Panc1 (cell line): ENCODE measurements at regions of chr12 and their contacts with region 1.

Region 1: GRCh38 chr12:54958048-54958658 is 26.4 kb downstream of the TESPA1 start:
- DNase-seq: peak; percentile 64
- ATAC-seq: no peak
- H3K4me3 ChIP-seq: no peak overlapping the region
- H3K27ac ChIP-seq: no peak overlapping the region
- H3K4me1 ChIP-seq: no peaks in the 10 kb centered on the region
- H3K27me3 ChIP-seq: peaks cover 14% of the 10 kb centered on the region
- CTCF ChIP-seq: peak; percentile 64; the same call in 1 of the 2 replicates

Region 2: GRCh38 chr12:54701940-54702592 is 256.1 kb before region 1 on chr12:
- CTCF ChIA-PET with region 1: interaction called, 3 read pairs
- POLR2A ChIA-PET with region 1: no interaction called
- in situ Hi-C with region 1: no loop called
- intact Hi-C with region 1: loop called (anchors 2 kb)
- DNase-seq: no peak
- ATAC-seq: peak; percentile 75
- H3K4me3 ChIP-seq: no peak overlapping the region
- H3K27ac ChIP-seq: no peak overlapping the region
- H3K4me1 ChIP-seq: no peaks in the 10 kb centered on the region
- H3K27me3 ChIP-seq: peaks cover 10% of the 10 kb centered on the region
- CTCF ChIP-seq: peak; percentile 72

Region 3: DNA sequence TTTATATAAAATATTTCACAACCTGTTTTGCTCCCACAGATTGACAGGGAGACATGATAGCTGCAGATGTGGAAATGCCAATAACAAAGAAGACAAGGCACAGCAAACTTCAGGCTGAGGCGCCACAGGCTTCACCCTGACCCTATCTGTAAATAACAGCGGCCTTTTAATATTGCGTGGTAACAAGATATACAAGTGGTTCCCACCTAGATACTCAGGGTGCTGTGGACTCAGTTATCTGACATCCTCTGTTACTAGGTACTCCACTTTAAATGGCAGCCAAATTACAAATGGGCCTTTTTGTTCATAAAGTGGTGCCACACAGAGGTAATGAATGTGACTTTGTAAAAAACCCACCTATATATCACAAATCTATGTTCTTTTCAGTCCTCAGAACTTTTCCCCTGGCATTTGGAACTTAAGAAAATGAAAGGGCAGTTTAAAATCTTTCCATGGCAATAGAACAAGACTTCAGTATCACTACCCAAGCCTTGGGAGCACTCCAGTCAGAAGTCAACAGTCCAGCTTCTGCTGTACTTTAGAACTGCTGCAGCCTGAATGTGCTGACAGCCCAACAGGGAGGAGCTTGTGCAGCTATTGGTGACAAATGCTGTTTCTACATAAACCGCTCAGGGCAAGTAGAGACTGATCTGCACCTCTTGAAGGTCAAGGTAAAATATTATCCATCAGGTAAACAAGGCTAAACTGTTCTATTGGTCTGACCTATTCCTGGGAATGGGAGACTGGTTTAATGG is 223.8 kb before region 1 on chr12:
- CTCF ChIA-PET with region 1: no interaction called
- POLR2A ChIA-PET with region 1: no interaction called
- in situ Hi-C with region 1: no loop called
- intact Hi-C with region 1: no loop called
- DNase-seq: no peak
- ATAC-seq: no peak
- H3K4me3 ChIP-seq: no peak overlapping the region
- H3K27ac ChIP-seq: no peak overlapping the region
- H3K4me1 ChIP-seq: no peaks in the 10 kb centered on the region
- H3K27me3 ChIP-seq: peaks cover 3% of the 10 kb centered on the region; the same call in 1 of the 2 replicates
- CTCF ChIP-seq: no peak

Region 4: DNA sequence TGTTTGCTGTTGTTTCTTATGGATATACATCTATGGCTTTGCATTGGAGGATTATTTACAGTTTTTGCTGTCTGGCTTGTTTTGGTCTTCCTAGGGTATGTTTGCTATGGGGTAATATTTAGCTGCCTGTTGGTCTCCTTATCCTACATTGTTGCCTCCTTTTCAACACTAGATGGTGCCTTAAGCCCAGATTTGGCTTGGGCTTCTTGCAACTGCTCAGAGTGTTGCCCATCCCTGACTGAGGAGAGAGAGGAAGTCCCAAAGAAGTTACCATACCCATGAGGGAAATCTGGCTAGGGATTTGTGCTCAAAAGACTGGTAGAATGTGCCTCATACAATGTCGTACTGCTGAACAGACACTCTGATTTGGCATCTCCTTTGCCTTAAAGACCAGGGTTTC is 198.4 kb before region 1 on chr12:
- CTCF ChIA-PET with region 1: interaction called, 5 read pairs
- POLR2A ChIA-PET with region 1: no interaction called
- in situ Hi-C with region 1: no loop called
- intact Hi-C with region 1: loop called (anchors 1 kb)
- DNase-seq: peak; percentile 18
- ATAC-seq: peak; percentile 87
- H3K4me3 ChIP-seq: no peak overlapping the region
- H3K27ac ChIP-seq: no peak overlapping the region
- H3K4me1 ChIP-seq: no peaks in the 10 kb centered on the region
- H3K27me3 ChIP-seq: peaks cover 5% of the 10 kb centered on the region; the same call in 1 of the 2 replicates
- CTCF ChIP-seq: peak; percentile 67